Endothelial cell of umbilical vein (primary cell): ENCODE measurements at regions of chrX and their contacts with region 1.

Region 1: GRCh38 chrX:17788439-17788838 is 51.1 kb downstream of the SCML1 start:
- DNase-seq: peak; percentile 24
- H3K4me3 ChIP-seq: no peak overlapping the region
- H3K27ac ChIP-seq: no peak overlapping the region
- H3K4me1 ChIP-seq: no peaks in the 10 kb centered on the region
- H3K27me3 ChIP-seq: no peaks in the 10 kb centered on the region
- CTCF ChIP-seq: peak; percentile 52 to 69
- POLR2A ChIP-seq: no peak

Region 2: GRCh38 chrX:17744896-17745523 is 43.4 kb before region 1 on chrX:
- CTCF ChIA-PET with region 1: no interaction called
- POLR2A ChIA-PET with region 1: no interaction called
- dilution Hi-C with region 1: no loop called
- intact Hi-C with region 1: loop called (anchors 2 kb)
- DNase-seq: peak; percentile 21
- H3K4me3 ChIP-seq: no peak overlapping the region
- H3K27ac ChIP-seq: no peak overlapping the region
- H3K4me1 ChIP-seq: no peaks in the 10 kb centered on the region
- H3K27me3 ChIP-seq: no peaks in the 10 kb centered on the region
- CTCF ChIP-seq: no peak
- POLR2A ChIP-seq: no peak